Breast epithelium (tissue), 4 donors: ENCODE measurements at regions of chr10 and their contacts with region 1.

Region 1: GRCh38 chr10:44380841-44381600 is 3.9 kb downstream of the CXCL12 start:
- DNase-seq: no peak
- H3K4me3 ChIP-seq: peak overlapping the region in 1 of 3 donors; percentile 27
- H3K27ac ChIP-seq: peak overlapping the region in 1 of 2 donors; percentile 1
- H3K4me1 ChIP-seq: no peaks in the 10 kb centered on the region
- H3K27me3 ChIP-seq: peaks cover 0 to 22% of the 10 kb centered on the region in 2 donors
- CTCF ChIP-seq: no peak
- POLR2A ChIP-seq: no peak

Region 2: DNA sequence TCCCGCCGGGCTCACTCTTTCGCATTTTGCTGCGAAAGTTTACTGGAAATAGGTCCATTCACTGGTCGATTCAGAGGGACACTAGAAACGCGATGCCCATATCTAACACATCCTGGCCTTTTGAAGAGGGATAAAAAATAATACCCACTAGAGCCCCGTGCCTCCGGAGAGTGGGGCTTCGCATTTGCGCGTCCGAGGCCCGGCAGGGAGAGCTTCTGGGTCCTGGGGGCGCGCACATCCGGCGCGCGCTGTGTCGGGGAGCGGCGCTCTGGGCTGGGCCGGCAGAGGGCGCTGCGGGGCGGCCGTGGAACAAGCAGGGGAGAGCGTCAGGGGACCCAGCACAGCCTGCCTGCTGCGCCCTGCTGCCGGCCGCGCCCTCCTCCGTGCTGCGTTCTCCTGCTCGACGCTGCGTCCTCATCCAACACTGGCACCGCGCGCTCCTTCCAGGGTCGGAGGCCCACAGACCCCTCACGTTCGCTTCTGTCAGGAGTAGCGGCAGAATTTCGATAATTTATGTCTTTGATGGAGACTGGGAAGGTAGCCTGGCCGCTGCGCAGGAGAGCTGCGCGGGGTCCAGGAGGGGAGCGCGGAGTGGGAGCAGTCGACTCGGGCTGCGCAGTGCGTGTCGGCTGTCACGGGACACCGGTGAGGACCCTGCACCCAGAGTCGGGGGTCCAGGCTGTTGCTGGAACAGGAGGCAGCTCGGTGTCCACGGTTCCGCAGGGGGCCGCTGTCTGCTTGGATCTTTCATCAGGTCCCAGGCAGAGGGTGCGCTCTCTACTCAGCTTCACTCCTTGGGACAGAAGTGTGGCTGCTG is 690.9 kb before region 1 on chr10:
- intact Hi-C with region 1: loop called (anchors 2 kb)
- DNase-seq: peak; percentile 67 to 85
- H3K4me3 ChIP-seq: peak overlapping the region; percentile 42 to 76 (median 56)
- H3K27ac ChIP-seq: peak overlapping the region; percentile 82 to 87
- H3K4me1 ChIP-seq: no peaks in the 10 kb centered on the region
- H3K27me3 ChIP-seq: no peaks in the 10 kb centered on the region
- CTCF ChIP-seq: peak; percentile 85 to 97 (median 88)
- POLR2A ChIP-seq: no peak

Region 3: DNA sequence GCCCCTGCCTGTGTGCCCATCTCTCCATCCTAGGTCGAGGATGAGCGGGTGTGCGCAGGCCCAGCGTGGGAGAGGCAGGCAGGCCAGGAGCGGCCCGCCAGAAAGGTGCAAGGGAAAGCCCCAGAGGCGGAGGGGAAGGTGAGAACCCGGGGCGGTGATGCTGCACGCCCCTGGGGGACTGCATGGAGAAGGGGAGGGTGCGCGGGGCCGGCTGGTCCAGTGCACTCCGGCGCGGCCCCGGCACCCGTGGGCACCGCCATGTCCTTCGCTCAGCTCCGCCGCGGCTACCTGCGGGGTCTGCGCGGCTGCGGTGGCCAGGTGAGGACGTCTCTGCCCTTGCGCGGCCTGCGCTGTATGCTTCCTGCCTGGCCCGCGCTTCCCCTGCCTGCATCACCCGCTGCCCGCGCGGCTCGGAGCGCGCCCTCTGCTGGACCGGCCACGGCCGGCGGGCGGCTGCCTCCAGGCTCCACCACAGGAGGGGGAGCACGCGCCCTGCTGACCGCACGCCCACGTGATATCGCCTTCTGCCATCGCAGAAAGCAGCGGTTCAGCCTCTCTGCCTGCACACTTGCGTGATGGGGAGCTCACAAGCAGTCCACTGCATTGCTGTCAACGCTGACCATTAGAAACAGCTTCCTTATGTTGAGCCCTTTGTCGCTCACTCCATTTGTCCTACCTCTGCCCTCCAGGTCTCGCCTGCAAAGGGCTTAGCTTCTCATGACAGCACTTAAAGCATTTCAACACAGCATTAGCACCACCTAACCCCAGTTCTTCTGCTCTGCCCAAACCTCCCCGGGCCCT is 70.1 kb before region 1 on chr10:
- intact Hi-C with region 1: loop called (anchors 2 kb)
- DNase-seq: peak; percentile 77 to 83
- H3K4me3 ChIP-seq: peak overlapping the region; percentile 20 to 62 (median 41)
- H3K27ac ChIP-seq: peak overlapping the region; percentile 50 to 60
- H3K4me1 ChIP-seq: peaks cover 0 to 9% of the 10 kb centered on the region in 2 donors
- H3K27me3 ChIP-seq: no peaks in the 10 kb centered on the region
- CTCF ChIP-seq: peak; percentile 73 to 96 (median 83)
- POLR2A ChIP-seq: no peak

Region 4: GRCh38 chr10:45135443-45136198 is 754.6 kb after region 1 on chr10:
- intact Hi-C with region 1: no loop called
- DNase-seq: no peak
- H3K4me3 ChIP-seq: no peak overlapping the region
- H3K27ac ChIP-seq: no peak overlapping the region
- H3K4me1 ChIP-seq: no peaks in the 10 kb centered on the region
- H3K27me3 ChIP-seq: no peaks in the 10 kb centered on the region
- CTCF ChIP-seq: no peak
- POLR2A ChIP-seq: no peak